ENCODE measurements at regions of chr11 and their contacts with region 1.

Region 1: GRCh38 chr11:14907411-14908213 is 15.6 kb upstream of the CYP2R1 start:
- DNase-seq: peak; percentile 93
- ATAC-seq: peak; percentile 74

Region 2: DNA sequence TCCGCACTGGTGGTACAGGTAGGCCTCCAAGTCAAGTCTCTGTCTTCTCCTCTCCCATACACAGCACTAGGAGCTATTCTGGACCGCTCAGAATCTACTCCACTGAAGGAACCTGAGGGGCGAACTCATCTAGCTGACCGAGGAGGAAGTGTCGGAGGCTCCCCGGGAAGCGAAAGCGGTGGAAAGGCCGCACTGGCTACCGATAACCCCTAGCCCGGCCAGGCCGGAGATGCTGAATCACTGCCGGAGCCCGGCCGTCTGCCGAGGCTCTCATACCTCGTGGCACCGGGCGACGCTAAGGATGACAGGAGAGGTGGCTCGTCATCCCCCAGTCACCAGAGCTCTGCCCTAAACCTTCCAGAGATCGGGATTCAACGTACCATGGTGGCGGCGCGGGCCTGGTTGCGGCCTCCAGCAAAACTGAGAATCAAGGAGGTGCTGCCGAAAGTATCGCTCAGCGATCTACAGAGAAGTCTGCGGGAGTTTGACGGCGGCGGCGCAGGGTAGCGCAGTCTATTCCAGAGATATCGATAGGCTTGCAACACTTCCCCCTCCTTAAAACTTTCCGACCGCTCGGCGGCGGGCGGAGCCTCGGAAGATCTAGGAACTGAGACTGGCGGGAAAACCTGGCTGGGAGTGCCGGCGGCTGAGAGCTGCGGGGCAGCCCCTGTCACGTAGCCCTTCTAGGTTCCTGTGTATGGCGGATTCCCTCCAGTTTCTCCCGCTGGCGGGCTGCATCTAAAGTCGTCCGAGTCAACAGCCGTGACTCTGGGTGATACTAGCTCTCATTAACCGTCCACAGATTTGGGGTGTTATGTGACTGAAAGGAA is 387.5 kb before region 1 on chr11 and contains the start of gene PSMA1:
- intact Hi-C with region 1: loop called (anchors 5 kb)
- DNase-seq: peak; percentile 97
- ATAC-seq: peak; percentile 99
- total RNA-seq, gene PSMA1: 117 TPM

Region 3: GRCh38 chr11:14537134-14537599 is 370.4 kb before region 1 on chr11:
- intact Hi-C with region 1: loop called (anchors 1 kb)
- DNase-seq: no peak
- ATAC-seq: no peak

Region 4: DNA sequence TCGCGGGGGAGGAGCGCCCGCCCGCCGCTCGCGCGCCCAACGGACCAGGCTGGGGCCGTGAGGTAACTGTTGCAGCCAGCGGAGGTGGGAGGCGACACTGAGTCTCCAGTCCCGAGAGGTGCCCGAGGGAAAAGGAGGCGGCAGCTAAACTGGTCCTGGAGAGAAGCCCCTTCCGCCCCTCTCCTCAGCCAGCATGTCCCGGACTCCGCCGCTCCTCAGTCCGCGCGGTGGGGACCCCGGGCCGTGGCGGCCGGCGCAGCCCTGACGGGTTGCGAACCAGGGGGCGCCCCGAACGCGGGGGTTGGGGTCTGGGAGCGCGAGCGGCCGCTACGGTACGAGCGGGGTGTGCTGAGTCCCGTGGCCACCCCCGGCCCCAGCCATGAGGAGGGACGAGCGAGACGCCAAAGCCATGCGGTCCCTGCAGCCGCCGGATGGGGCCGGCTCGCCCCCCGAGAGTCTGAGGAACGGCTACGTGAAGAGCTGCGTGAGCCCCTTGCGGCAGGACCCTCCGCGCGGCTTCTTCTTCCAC is 263.9 kb before region 1 on chr11 and contains the start of gene PDE3B:
- intact Hi-C with region 1: loop called (anchors 5 kb)
- DNase-seq: peak; percentile 93
- ATAC-seq: peak; percentile 95
- total RNA-seq, gene PDE3B: 4.5 TPM

Region 5: DNA sequence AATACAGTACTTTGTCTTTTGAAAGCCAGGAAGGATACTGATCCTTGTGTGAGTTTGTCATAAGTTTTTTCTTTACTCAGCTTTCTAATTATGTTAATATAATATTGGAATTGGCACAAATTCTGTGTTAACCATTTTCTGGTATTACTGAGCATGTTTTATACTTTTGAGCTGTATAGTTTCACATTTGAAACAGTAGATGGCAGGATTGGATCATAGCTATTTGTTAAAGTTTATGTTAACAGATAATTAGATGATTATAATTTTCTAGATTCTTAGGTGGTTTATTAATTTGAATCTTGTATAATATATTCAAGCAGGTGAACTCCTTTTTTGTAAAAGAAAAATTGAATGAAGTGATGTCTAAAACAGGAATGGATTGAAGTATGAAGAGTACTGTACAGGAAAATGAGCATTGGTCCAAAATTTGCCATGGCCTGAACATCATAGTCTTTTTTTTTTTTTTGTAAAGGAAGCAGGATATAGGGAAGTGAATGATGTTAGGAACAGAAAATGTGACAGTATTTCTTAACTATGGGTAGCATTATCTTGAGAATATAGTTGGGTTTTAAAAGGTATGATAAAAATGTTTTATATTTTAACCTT is 117.6 kb before region 1 on chr11:
- intact Hi-C with region 1: loop called (anchors 1 kb)
- DNase-seq: no peak
- ATAC-seq: no peak

Region 6: GRCh38 chr11:15034687-15035267 is 127.2 kb after region 1 on chr11:
- intact Hi-C with region 1: no loop called
- DNase-seq: no peak
- ATAC-seq: no peak

Region 7: GRCh38 chr11:15074206-15075161 is 166.9 kb after region 1 on chr11:
- intact Hi-C with region 1: loop called (anchors 2 kb)
- DNase-seq: peak; percentile 92
- ATAC-seq: peak; percentile 85

Region 8: GRCh38 chr11:15208378-15209222 is 301.0 kb after region 1 on chr11:
- intact Hi-C with region 1: loop called (anchors 2 kb)
- DNase-seq: peak; percentile 88
- ATAC-seq: peak; percentile 81